ENCODE measurements at regions of chr4 and their contacts with region 1.

Region 1: GRCh38 chr4:75786526-75786925 is 62.1 kb downstream of the USO1 start:
- DNase-seq: no peak
- ATAC-seq: no peak
- H3K4me3 ChIP-seq: no peak overlapping the region
- H3K27ac ChIP-seq: no peak overlapping the region
- H3K4me1 ChIP-seq: no peaks in the 10 kb centered on the region
- H3K27me3 ChIP-seq: no peaks in the 10 kb centered on the region
- CTCF ChIP-seq: no peak
- POLR2A ChIP-seq: no peak

Region 2: DNA sequence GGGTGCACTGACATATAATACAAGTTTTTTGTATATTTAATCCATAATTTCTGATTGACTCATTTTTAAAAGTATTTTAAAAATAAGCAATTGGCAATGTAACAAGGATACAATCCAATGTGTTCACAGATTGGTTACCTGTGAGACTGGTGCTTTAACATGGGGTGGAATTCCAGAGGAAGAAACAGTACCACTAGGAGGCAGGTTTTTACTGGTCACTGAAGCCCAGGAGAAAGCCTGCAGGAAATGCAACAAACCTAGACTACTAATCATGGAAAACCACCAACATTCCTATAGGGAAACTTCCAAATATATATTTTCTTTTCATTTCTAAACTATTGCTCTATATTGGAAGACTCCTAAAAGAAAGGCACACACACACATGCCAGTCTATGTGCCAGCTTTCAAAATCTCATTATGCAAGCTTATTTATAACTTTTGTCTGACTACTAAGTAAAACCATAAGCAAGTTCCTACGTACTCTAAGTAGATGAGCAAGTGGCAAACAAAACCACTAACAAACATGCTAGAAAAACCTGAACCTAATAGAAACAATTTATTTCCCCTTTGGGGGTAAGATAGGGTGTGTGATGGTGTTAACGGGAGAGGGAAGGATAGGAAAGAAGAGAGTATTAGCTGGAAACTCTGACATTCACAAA is 132.6 kb before region 1 on chr4:
- in situ Hi-C with region 1: no loop called
- intact Hi-C with region 1: loop called (anchors 10 kb)
- DNase-seq: no peak
- ATAC-seq: peak in 1 of 2 donors; percentile 68
- H3K4me3 ChIP-seq: no peak overlapping the region
- H3K27ac ChIP-seq: peak overlapping the region in 2 of 4 donors; percentile 18 to 24
- H3K4me1 ChIP-seq: no peaks in the 10 kb centered on the region
- H3K27me3 ChIP-seq: no peaks in the 10 kb centered on the region
- CTCF ChIP-seq: peak in 4 of 5 experiments; percentile 22 to 56 (median 46)
- POLR2A ChIP-seq: no peak

Region 3: DNA sequence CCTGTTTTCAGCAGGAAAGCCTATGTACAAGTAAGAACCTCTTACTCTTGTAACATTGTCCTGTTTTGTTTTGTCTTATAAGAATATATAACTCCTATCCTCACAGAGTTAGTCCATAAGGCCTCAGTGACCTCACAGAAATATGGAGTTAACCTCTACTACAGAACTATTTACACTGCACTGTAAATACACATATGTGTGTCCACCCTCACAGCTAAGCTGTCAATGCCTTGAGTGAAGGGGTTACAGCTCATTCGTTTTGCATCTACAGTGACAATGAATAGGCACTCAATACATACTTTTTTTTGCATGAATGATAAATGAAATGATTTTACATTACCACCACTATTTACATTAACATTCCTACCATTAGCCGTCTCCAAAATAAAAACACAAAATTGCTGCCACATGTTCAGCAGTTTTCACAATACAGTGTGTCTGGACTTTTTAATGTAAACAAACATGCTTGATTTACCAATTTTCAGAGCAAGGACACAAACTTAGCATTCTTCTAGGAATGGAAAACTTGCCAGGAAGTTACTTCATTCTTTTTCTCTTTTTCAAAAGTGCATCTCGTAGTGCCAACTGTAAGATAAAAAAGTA is 163.8 kb after region 1 on chr4:
- in situ Hi-C with region 1: loop called in 1 of 4 experiments (anchors 25 kb)
- intact Hi-C with region 1: no loop called
- DNase-seq: no peak
- ATAC-seq: no peak
- H3K4me3 ChIP-seq: no peak overlapping the region
- H3K27ac ChIP-seq: no peak overlapping the region
- H3K4me1 ChIP-seq: no peaks in the 10 kb centered on the region
- H3K27me3 ChIP-seq: no peaks in the 10 kb centered on the region
- CTCF ChIP-seq: no peak
- POLR2A ChIP-seq: no peak

Region 4: GRCh38 chr4:75968084-75968483 is 181.6 kb after region 1 on chr4:
- in situ Hi-C with region 1: loop called in 2 of 4 experiments (anchors 10 to 25 kb)
- intact Hi-C with region 1: no loop called
- DNase-seq: no peak
- ATAC-seq: no peak
- H3K4me3 ChIP-seq: no peak overlapping the region
- H3K27ac ChIP-seq: no peak overlapping the region
- H3K4me1 ChIP-seq: no peaks in the 10 kb centered on the region
- H3K27me3 ChIP-seq: no peaks in the 10 kb centered on the region
- CTCF ChIP-seq: no peak
- POLR2A ChIP-seq: no peak

Region 5: GRCh38 chr4:76016393-76016792 is 229.9 kb after region 1 on chr4:
- in situ Hi-C with region 1: no loop called
- intact Hi-C with region 1: no loop called
- DNase-seq: no peak
- ATAC-seq: no peak
- H3K4me3 ChIP-seq: no peak overlapping the region
- H3K27ac ChIP-seq: no peak overlapping the region
- H3K4me1 ChIP-seq: no peaks in the 10 kb centered on the region
- H3K27me3 ChIP-seq: no peaks in the 10 kb centered on the region
- CTCF ChIP-seq: no peak
- POLR2A ChIP-seq: no peak